ENCODE measurements at regions of chr19 and their contacts with region 1.

Region 1: GRCh38 chr19:45558399-45558878 is 26.2 kb downstream of the OPA3 start:
- H3K4me3 ChIP-seq: no peak overlapping the region
- H3K27ac ChIP-seq: no peak overlapping the region
- H3K4me1 ChIP-seq: no peaks in the 10 kb centered on the region
- CTCF ChIP-seq: peak; percentile 92

Region 2: GRCh38 chr19:45496349-45496953 is 62.0 kb before region 1 on chr19:
- CTCF ChIA-PET with region 1: interaction called, 13 read pairs
- POLR2A ChIA-PET with region 1: no interaction called
- H3K4me3 ChIP-seq: peak overlapping the region; percentile 53
- H3K27ac ChIP-seq: no peak overlapping the region
- H3K4me1 ChIP-seq: peaks cover 6% of the 10 kb centered on the region
- CTCF ChIP-seq: no peak

Region 3: DNA sequence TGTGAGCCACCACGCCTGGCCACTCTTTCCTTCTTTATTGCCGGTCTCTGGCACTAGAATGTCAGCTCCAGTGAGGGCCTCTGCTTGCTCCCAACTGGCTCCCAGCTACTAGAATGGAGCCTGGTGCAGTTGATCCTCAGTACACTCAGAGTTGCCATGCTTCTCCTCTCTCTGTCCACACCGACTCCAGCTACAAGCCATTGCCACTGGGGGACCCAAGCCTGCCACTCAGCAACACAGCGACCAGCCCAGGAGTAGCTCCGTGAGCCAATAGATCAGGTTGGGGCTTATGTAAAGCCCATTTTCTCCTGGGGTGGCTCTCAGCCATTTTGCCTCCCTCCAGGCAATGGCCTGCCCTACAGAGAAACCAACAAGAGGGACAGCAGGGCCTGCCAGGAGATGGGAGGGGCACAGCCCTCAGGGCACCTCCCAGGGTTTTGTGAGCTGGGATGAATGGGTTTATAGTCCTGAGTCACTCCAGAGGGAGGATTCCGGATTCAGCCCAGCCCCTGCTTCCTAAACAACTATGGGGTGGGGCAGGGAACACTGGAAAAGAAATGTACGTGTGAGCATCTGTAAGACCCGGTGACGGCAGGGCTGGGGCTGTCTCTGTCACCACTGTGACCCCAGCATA is 10.3 kb before region 1 on chr19:
- CTCF ChIA-PET with region 1: interaction called, 60 read pairs
- POLR2A ChIA-PET with region 1: no interaction called
- H3K4me3 ChIP-seq: no peak overlapping the region
- H3K27ac ChIP-seq: no peak overlapping the region
- H3K4me1 ChIP-seq: no peaks in the 10 kb centered on the region
- CTCF ChIP-seq: no peak

Region 4: GRCh38 chr19:45569619-45570421 is 11.4 kb after region 1 on chr19:
- CTCF ChIA-PET with region 1: interaction called, 46 read pairs
- POLR2A ChIA-PET with region 1: no interaction called
- H3K4me3 ChIP-seq: no peak overlapping the region
- H3K27ac ChIP-seq: no peak overlapping the region
- H3K4me1 ChIP-seq: peaks cover 7% of the 10 kb centered on the region
- CTCF ChIP-seq: peak; percentile 51; the same call in 1 of the 2 replicates